WTC11 (cell line): ENCODE measurements at regions of chr5 and their contacts with region 1.

Region 1: GRCh38 chr5:32585446-32586275 is at the start of gene SUB1:
- DNase-seq: peak; percentile 95
- ATAC-seq: peak; percentile 90
- H3K4me3 Mint-ChIP-seq: peak within 1 kb of the TSS; percentile 90
- H3K27ac Mint-ChIP-seq: peak within 1 kb of the TSS; percentile 99
- H3K4me1 Mint-ChIP-seq: peaks cover 52% of the 10 kb centered on the region
- H3K27me3 Mint-ChIP-seq: no peaks in the 10 kb centered on the region
- CTCF ChIP-seq: no peak
- total RNA-seq, gene SUB1: 255 to 258 TPM (median 258 TPM) in 3 replicates

Region 2: GRCh38 chr5:32450952-32451351 is 134.7 kb before region 1 on chr5:
- CTCF ChIA-PET with region 1: interaction called, 10 read pairs
- POLR2A ChIA-PET with region 1: no interaction called
- DNase-seq: no peak
- ATAC-seq: peak; percentile 72
- H3K4me3 Mint-ChIP-seq: no peak overlapping the region
- H3K27ac Mint-ChIP-seq: no peak overlapping the region
- H3K4me1 Mint-ChIP-seq: peaks cover 5% of the 10 kb centered on the region
- H3K27me3 Mint-ChIP-seq: peaks cover 9% of the 10 kb centered on the region
- CTCF ChIP-seq: no peak

Region 3: DNA sequence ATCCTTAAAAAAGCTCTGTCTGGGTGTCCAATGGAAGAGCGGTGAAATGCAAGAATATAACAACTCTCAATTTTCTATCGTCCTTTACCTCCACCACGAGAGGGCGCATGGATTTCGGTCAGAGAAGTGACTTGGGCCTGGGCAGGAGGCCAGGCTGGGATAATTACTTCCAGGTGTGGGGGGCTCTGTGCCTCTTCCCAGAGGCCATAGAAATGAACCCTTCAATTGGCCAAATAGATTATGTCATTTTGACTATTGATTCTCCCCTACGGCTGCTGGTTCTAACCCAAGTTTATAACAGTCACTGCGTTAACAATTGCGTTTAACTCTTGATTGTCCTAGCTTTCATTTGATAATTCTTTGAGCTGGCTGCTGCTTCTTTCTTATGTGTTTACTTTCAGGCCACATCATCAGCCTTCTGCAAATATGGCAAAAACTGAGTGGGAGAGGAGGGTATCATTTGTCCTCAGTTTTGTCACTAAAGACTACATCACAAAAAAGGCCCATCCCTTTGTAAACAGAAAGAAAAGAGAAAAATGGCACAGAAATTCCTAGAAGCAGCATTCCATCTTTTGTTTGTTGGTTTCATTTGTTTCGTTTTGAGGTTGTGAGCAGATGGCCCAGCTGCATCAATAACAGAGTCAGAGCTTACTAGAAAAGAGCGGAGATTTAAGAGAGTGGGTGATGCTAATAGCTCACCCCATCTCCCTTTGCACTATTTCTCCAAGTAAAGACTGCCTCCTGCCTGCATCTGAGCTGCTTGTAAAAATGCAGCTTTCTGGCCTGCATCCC is 95.7 kb before region 1 on chr5:
- CTCF ChIA-PET with region 1: interaction called, 195 read pairs
- POLR2A ChIA-PET with region 1: interaction called, 4 read pairs
- DNase-seq: peak; percentile 76
- ATAC-seq: peak; percentile 92
- H3K4me3 Mint-ChIP-seq: no peak overlapping the region
- H3K27ac Mint-ChIP-seq: no peak overlapping the region; the same call in 1 of the 2 replicates
- H3K4me1 Mint-ChIP-seq: peaks cover 5% of the 10 kb centered on the region
- H3K27me3 Mint-ChIP-seq: peaks cover 4% of the 10 kb centered on the region
- CTCF ChIP-seq: peak; percentile 62; the same call in 1 of the 2 replicates

Region 4: DNA sequence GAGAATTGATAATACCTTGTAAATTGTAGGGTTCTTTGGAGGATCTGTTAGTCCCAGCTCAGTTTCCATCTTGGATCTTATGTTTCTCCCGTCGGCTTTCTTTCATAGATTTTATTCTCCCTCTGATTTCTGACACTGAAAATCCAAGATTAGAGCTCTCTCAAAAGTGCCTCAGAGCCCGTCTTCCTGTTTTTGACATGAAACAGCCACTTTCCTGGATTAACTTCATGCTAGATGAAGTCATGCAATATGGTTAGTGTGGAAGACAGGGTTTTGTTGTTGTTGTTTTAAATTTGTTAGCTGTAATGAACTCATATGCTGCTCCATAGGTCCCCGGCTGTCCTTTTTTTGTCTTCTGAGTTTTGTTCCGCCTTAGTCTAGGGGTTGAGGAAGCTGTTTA is 89.6 kb before region 1 on chr5:
- CTCF ChIA-PET with region 1: interaction called, 195 read pairs
- POLR2A ChIA-PET with region 1: interaction called, 9 read pairs
- DNase-seq: no peak
- ATAC-seq: no peak
- H3K4me3 Mint-ChIP-seq: no peak overlapping the region
- H3K27ac Mint-ChIP-seq: no peak overlapping the region
- H3K4me1 Mint-ChIP-seq: peaks cover 13% of the 10 kb centered on the region
- H3K27me3 Mint-ChIP-seq: peaks cover 62% of the 10 kb centered on the region
- CTCF ChIP-seq: no peak

Region 5: DNA sequence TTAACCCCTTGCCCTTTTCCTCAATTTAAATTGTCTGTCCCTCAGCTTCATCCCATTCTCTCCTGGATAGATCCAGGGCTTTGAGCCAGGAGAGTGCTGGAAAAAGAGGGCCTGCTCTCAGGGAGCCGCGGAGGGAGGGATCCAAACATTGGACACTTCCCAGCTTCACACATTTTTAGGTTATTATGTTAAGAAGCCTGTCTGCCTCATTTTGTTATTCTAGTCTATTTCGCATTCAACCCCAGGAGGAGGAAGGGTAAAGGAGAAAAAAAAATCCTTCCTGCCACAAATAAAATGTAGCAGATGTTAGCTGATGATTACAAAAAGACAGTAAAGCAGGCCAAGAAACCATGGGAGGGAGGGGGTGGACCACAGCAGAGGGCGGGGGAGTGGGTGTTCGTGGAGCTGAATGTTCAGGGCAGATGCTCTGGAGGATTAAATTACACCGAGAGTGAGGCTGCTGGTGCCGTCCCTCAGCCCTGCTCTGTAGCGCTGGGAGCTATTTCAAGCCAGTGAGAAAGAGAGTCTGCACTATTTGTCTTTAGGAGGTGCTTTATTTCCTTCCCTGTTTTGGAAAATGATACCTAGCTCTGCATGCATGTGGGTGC is 80.6 kb before region 1 on chr5:
- CTCF ChIA-PET with region 1: interaction called, 42 read pairs
- POLR2A ChIA-PET with region 1: interaction called, 9 read pairs
- DNase-seq: no peak
- ATAC-seq: peak; percentile 46
- H3K4me3 Mint-ChIP-seq: no peak overlapping the region
- H3K27ac Mint-ChIP-seq: no peak overlapping the region
- H3K4me1 Mint-ChIP-seq: peaks cover 59% of the 10 kb centered on the region
- H3K27me3 Mint-ChIP-seq: peaks cover 80% of the 10 kb centered on the region
- CTCF ChIP-seq: no peak